ENCODE measurements at regions of chr17 and their contacts with region 1.

Region 1: GRCh38 chr17:7786866-7787265 is 47.2 kb upstream of the KDM6B start:
- DNase-seq: no peak
- H3K4me3 ChIP-seq: no peak overlapping the region
- H3K27ac ChIP-seq: no peak overlapping the region
- H3K4me1 ChIP-seq: no peaks in the 10 kb centered on the region
- H3K27me3 ChIP-seq: no peaks in the 10 kb centered on the region
- CTCF ChIP-seq: no peak
- POLR2A ChIP-seq: no peak

Region 2: GRCh38 chr17:7261172-7261927 is 525.5 kb before region 1 on chr17:
- intact Hi-C with region 1: loop called (anchors 5 kb)
- DNase-seq: no peak
- H3K4me3 ChIP-seq: peak overlapping the region; percentile 44 to 58
- H3K27ac ChIP-seq: peak overlapping the region; percentile 47
- H3K4me1 ChIP-seq: peaks cover 36% of the 10 kb centered on the region
- H3K27me3 ChIP-seq: peaks cover 11% of the 10 kb centered on the region
- CTCF ChIP-seq: no peak
- POLR2A ChIP-seq: no peak

Region 3: GRCh38 chr17:7745748-7746470 is 41.0 kb before region 1 on chr17:
- intact Hi-C with region 1: no loop called
- DNase-seq: no peak
- H3K4me3 ChIP-seq: no peak overlapping the region
- H3K27ac ChIP-seq: no peak overlapping the region
- H3K4me1 ChIP-seq: peaks cover 10% of the 10 kb centered on the region
- H3K27me3 ChIP-seq: no peaks in the 10 kb centered on the region
- CTCF ChIP-seq: peak in 1 of 3 experiments; percentile 6
- POLR2A ChIP-seq: no peak

Region 4: GRCh38 chr17:7867881-7868329 is 81.0 kb after region 1 on chr17:
- intact Hi-C with region 1: no loop called
- DNase-seq: peak; percentile 52 to 79
- H3K4me3 ChIP-seq: no peak overlapping the region
- H3K27ac ChIP-seq: no peak overlapping the region
- H3K4me1 ChIP-seq: peaks cover 16% of the 10 kb centered on the region
- H3K27me3 ChIP-seq: no peaks in the 10 kb centered on the region
- CTCF ChIP-seq: no peak
- POLR2A ChIP-seq: no peak